Panc1 (cell line): ENCODE measurements at regions of chr12 and their contacts with region 1.

Region 1: DNA sequence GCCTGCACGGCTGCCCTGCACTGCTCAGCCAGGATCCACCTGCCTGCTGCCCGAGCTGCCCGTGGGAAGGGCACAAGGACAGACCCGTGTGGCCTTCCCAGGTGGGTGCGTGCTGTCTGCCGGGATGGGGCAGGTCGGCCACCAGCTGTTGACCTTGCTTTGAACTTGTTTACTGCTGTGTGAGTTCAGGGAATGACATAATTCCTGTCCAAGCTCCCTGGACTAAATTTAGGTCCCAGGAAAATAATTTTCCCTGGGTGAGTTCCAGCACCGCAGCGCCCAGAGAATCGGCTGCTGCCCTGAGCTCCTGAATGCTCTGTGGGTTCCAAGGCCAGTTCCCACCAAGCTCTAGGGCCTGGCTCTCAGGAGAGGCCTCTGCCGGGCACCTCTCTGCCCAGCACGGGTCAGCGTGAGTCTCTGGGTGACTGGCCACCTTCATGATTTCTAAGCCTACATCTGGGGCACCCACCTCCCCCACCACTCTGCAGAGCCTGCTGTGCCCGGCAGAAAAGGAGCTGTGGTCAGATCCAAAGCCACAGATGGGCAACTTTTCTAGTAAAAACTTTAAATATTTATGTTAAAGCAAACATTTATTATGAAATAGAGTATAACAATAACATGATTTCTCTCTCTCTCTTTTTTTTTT is 27.2 kb upstream of the MLXIP start:
- DNase-seq: no peak
- ATAC-seq: 0 out of 2 replicates have a peak, but pooled peaks have one; percentile 25
- H3K4me3 ChIP-seq: no peak overlapping the region
- H3K27ac ChIP-seq: no peak overlapping the region
- H3K4me1 ChIP-seq: peaks cover 4% of the 10 kb centered on the region; the same call in 1 of the 2 replicates
- H3K27me3 ChIP-seq: no peaks in the 10 kb centered on the region
- CTCF ChIP-seq: no peak

Region 2: GRCh38 chr12:122123051-122123760 is 71.9 kb after region 1 on chr12:
- CTCF ChIA-PET with region 1: interaction called, 8 read pairs
- POLR2A ChIA-PET with region 1: no interaction called
- in situ Hi-C with region 1: no loop called
- intact Hi-C with region 1: loop called (anchors 2 kb)
- DNase-seq: no peak
- ATAC-seq: peak; percentile 79
- H3K4me3 ChIP-seq: no peak overlapping the region
- H3K27ac ChIP-seq: peak overlapping the region; percentile 87
- H3K4me1 ChIP-seq: peaks cover 58% of the 10 kb centered on the region
- H3K27me3 ChIP-seq: no peaks in the 10 kb centered on the region
- CTCF ChIP-seq: peak; percentile 85